CD8-positive, alpha-beta memory T cell (primary cell): ENCODE measurements at regions of chr5 and their contacts with region 1.

Region 1: GRCh38 chr5:103119765-103120606 is at the starts of genes GIN1 and PPIP5K2:
- DNase-seq: peak; percentile 92 to 98 (median 96)
- H3K4me3 ChIP-seq: peak within 1 kb of the TSS; percentile 90
- H3K4me3 Mint-ChIP-seq: peak within 1 kb of the TSS; percentile 92 to 99 (median 97)
- H3K27ac ChIP-seq: peak within 1 kb of the TSS; percentile 95
- H3K27ac Mint-ChIP-seq: peak within 1 kb of the TSS; percentile 93 to 100 (median 99)
- H3K4me1 ChIP-seq: peaks cover 27% of the 10 kb centered on the region
- H3K4me1 Mint-ChIP-seq: peaks cover 47 to 72% (median 54%) of the 10 kb centered on the region in 3 donors
- H3K27me3 ChIP-seq: no peaks in the 10 kb centered on the region
- H3K27me3 Mint-ChIP-seq: no peaks in the 10 kb centered on the region
- total RNA-seq, gene GIN1: 8.6 to 9.3 TPM
- total RNA-seq, gene PPIP5K2: 55.7 to 63.6 TPM

Region 2: DNA sequence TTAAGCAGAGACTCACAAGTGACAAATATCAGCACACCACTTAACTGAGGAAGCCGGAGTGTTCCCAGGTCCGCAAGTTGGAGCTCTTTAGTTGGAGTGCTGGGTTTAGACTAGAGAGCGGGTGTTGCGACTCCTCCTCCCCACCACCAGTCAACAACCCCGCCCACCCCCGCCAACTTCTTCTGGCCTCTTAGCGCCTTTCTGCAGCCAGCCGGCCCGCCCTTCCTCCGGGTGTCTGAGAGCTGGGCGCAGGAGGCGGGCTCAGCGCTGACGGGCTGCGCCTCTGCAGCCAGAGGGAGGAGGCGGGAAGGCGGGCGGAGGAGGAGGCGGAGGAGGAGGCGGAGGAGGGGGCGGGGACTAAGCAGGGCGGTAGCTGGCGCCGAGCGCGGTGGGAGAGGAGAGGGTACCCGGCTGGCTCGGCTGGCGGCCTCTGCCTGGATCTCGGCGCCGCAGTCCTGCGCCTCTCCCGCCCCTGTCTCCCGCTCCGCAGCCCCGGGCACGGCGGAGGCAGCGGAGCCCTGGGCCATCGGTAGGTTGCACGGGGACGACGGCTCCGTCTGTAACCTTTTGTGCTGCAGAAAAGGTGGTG is 138.5 kb after region 1 on chr5 and contains the start of gene MACIR:
- CTCF ChIA-PET with region 1: no interaction called
- POLR2A ChIA-PET with region 1: interaction called, 11 read pairs
- DNase-seq: peak; percentile 87 to 96 (median 93)
- H3K4me3 ChIP-seq: peak within 1 kb of the TSS; percentile 70
- H3K4me3 Mint-ChIP-seq: peak within 1 kb of the TSS; percentile 82 to 95 (median 91)
- H3K27ac ChIP-seq: peak within 1 kb of the TSS; percentile 62
- H3K27ac Mint-ChIP-seq: peak within 1 kb of the TSS; percentile 58 to 95 (median 88)
- H3K4me1 ChIP-seq: peaks cover 4% of the 10 kb centered on the region
- H3K4me1 Mint-ChIP-seq: peaks cover 15 to 32% (median 24%) of the 10 kb centered on the region in 3 donors
- H3K27me3 ChIP-seq: no peaks in the 10 kb centered on the region
- H3K27me3 Mint-ChIP-seq: peaks cover 5 to 22% of the 10 kb centered on the region in 2 donors
- total RNA-seq, gene MACIR: 9.9 to 10.5 TPM